ENCODE measurements at regions of chr12 and their contacts with region 1.

Region 1: GRCh38 chr12:65384240-65384639 is 105.8 kb downstream of the MSRB3 start:
- DNase-seq: no peak
- H3K4me3 ChIP-seq: no peak overlapping the region
- CTCF ChIP-seq: no peak
- POLR2A ChIP-seq: no peak

Region 2: DNA sequence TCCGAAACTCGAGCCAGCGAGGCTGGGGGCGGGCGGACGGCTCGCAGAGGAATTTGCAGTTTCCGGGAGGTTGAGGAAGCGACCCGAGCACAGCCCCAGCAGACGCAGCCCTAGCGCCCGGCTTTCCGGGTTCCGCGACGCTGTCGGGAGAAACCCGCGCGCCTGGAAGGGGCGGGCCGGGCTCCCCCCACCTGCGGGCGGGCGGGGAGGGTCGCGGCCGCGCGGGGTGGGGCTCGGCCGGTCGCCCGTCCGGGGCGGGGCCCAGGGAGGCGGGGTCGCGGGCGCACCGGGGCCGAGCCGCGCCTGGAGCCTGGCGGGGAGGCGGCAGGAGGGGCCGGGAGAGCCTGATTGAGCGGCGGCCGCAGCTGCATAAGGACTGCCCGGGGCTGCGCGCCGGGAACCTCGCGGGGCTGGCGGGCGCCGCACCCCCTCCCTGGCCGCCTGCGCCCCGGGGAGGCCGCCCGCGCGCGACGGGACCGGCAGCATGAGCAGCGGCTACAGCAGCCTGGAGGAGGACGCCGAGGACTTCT is 774.0 kb before region 1 on chr12 and contains the start of gene RASSF3:
- intact Hi-C with region 1: no loop called
- DNase-seq: peak; percentile 44 to 94
- H3K4me3 ChIP-seq: peak within 1 kb of the TSS; percentile 85
- CTCF ChIP-seq: no peak
- POLR2A ChIP-seq: no peak
- total RNA-seq, gene RASSF3: 5.2 to 13.5 (median 7.8) TPM

Region 3: GRCh38 chr12:65415826-65416225 is 31.6 kb after region 1 on chr12:
- intact Hi-C with region 1: no loop called
- DNase-seq: no peak
- H3K4me3 ChIP-seq: no peak overlapping the region
- CTCF ChIP-seq: no peak
- POLR2A ChIP-seq: no peak

Region 4: GRCh38 chr12:66288121-66288520 is 903.9 kb after region 1 on chr12:
- intact Hi-C with region 1: loop called (anchors 5 kb)
- DNase-seq: no peak
- H3K4me3 ChIP-seq: no peak overlapping the region
- CTCF ChIP-seq: no peak
- POLR2A ChIP-seq: no peak

Measured in lower leg skin (tissue), 4 donors.